Tibial artery (tissue), 4 donors: ENCODE measurements at regions of chr4 and their contacts with region 1.

Region 1: GRCh38 chr4:73662709-73663546 is 42.7 kb upstream of the RASSF6 start:
- DNase-seq: no peak
- H3K4me3 ChIP-seq: no peak overlapping the region
- H3K27ac ChIP-seq: no peak overlapping the region
- H3K4me1 ChIP-seq: no peaks in the 10 kb centered on the region
- H3K27me3 ChIP-seq: no peaks in the 10 kb centered on the region
- CTCF ChIP-seq: peak; percentile 40 to 61

Region 2: DNA sequence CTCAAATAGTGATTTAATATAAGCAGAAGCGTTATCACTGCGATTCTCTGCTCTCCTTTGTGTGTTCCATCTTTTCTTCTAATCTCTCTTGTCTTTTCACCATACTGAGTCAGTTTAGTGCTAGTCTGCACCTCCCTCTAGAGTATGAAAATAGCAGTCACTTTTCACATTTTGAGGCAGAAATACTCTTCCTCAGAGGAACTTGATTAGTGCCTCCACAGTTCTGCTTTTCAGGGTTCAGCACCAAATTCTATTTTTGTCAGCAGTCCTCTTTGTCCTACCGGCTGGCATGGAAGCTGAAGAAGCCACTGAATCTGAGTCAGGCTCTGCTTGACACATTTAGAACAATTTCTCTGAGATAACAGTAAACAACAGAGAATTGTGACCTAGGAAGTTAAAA is 354.6 kb before region 1 on chr4:
- intact Hi-C with region 1: no loop called
- DNase-seq: no peak
- H3K4me3 ChIP-seq: no peak overlapping the region
- H3K27ac ChIP-seq: no peak overlapping the region
- H3K4me1 ChIP-seq: no peaks in the 10 kb centered on the region
- H3K27me3 ChIP-seq: no peaks in the 10 kb centered on the region
- CTCF ChIP-seq: no peak

Region 3: GRCh38 chr4:73853246-73853704 is 190.3 kb after region 1 on chr4 and contains the start of gene PF4V1:
- intact Hi-C with region 1: no loop called
- DNase-seq: peak in 1 of 2 donors; percentile 71
- H3K4me3 ChIP-seq: peak within 1 kb of the TSS; percentile 37 to 43
- H3K27ac ChIP-seq: no peak within 1 kb of the TSS
- H3K4me1 ChIP-seq: peaks cover 0 to 35% (median 13%) of the 10 kb centered on the region in 4 donors
- H3K27me3 ChIP-seq: peaks cover 0 to 3% of the 10 kb centered on the region in 2 donors
- CTCF ChIP-seq: no peak

Region 4: DNA sequence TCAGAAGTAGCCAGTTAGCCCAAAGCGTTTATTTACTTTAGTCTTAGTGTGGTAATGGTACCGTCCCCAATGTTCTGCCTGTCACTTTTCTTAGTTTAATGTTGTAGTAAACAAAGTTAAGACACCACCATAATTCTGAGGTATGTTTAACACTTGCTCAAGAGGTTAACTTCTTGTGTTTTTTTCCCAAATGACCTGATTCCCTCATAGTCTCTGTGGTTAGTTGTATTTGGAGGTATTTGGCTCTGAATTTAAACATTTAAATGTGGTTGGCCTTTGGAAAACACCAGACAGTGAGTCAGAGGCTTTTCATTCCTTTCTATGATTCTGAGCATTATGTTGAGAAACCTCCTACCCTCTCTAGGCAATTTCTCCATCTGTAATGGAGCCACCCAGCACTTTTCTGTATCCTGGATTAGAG is 254.2 kb after region 1 on chr4:
- intact Hi-C with region 1: loop called (anchors 5 kb)
- DNase-seq: no peak
- H3K4me3 ChIP-seq: no peak overlapping the region
- H3K27ac ChIP-seq: peak overlapping the region; percentile 32 to 45
- H3K4me1 ChIP-seq: peaks cover 0 to 15% (median 8%) of the 10 kb centered on the region in 4 donors
- H3K27me3 ChIP-seq: no peaks in the 10 kb centered on the region
- CTCF ChIP-seq: no peak